Activated CD4-positive, alpha-beta T cell treated with anti-CD3 and anti-CD28 coated beads, Interleukin-2, amount 10 ng/mL, durations not matched to agents 24 days and 14 days (primary cell): ENCODE measurements at regions of chr9 and their contacts with region 1.

Region 1: DNA sequence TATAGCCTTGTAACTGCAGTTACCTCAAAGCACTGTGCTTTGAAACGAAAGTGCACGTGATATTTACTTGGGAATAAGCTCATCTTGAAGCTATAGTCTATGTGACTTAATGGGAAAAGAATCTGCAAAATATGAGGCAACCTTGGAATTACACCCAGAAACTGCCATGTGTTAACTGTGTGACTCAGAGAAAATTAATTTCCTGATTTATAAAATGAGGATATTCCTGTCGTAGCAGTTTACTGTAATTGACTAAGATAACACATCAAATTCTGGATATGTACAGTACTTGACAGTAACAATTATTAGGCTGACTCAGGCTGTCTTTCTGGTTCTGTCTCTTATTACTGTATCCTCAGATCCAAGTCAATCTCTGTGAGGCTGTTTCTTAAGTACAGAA is 1079.9 kb upstream of the ACO1 start:
- DNase-seq: no peak
- H3K4me3 Mint-ChIP-seq: no peak overlapping the region
- H3K27ac Mint-ChIP-seq: no peak overlapping the region
- H3K4me1 Mint-ChIP-seq: peaks cover 13% of the 10 kb centered on the region
- H3K27me3 Mint-ChIP-seq: no peaks in the 10 kb centered on the region

Region 2: GRCh38 chr9:31347082-31347617 is 42.6 kb after region 1 on chr9:
- intact Hi-C with region 1: loop called (anchors 5 kb)
- DNase-seq: peak; percentile 81
- H3K4me3 Mint-ChIP-seq: peak overlapping the region; percentile 84
- H3K27ac Mint-ChIP-seq: peak overlapping the region; percentile 94
- H3K4me1 Mint-ChIP-seq: peaks cover 29% of the 10 kb centered on the region
- H3K27me3 Mint-ChIP-seq: no peaks in the 10 kb centered on the region

Region 3: DNA sequence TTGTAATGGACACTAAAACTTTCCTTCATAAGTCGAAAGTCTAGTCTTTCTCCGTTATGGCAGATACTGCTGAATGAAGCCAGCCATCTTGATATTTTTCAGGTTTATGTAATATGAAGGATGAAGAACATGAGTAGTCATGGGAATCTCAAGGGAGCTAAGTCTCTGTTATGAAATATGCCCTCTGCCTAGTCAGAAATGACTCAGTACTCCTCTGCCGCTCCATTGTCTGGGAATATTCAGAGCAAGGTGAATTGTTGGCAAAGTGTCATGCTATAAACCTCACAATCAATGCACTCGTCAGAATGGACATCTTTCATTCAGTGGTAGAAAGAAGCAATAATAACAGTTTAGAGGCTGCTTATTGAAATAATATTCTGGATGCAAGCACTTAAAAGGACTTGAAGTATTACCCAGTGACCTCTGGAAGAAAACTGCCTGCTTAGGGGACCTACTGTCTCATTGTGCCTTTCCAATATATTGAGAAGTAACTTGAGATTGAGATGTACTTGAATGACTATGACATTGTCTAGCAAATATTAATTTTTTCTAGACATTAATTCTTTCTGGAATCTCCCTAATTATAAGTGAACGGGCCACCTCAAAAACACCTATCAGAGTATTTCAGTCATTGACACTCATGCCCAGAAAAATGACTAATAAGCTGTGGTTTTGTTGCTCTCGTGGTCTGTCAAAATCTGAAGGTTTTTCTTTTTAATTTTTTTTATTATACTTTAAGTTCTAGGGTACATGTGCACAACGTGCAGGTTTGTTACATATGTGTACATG is 68.4 kb after region 1 on chr9:
- intact Hi-C with region 1: no loop called
- DNase-seq: no peak
- H3K4me3 Mint-ChIP-seq: no peak overlapping the region
- H3K27ac Mint-ChIP-seq: no peak overlapping the region
- H3K4me1 Mint-ChIP-seq: no peaks in the 10 kb centered on the region
- H3K27me3 Mint-ChIP-seq: no peaks in the 10 kb centered on the region

Region 4: GRCh38 chr9:33151007-33151557 is 1846.5 kb after region 1 on chr9:
- intact Hi-C with region 1: no loop called
- DNase-seq: no peak
- H3K4me3 Mint-ChIP-seq: no peak overlapping the region
- H3K27ac Mint-ChIP-seq: no peak overlapping the region
- H3K4me1 Mint-ChIP-seq: peaks cover 61% of the 10 kb centered on the region
- H3K27me3 Mint-ChIP-seq: no peaks in the 10 kb centered on the region